PC-9 (cell line): ENCODE measurements at regions of chr4 and their contacts with region 1.

Region 1: GRCh38 chr4:173191623-173192041 is 23.0 kb downstream of the GALNT7 start:
- DNase-seq: peak in 1 of 2 experiments; percentile 97
- H3K4me3 ChIP-seq: no peak overlapping the region; the same call in 1 of the 2 replicates
- H3K27ac ChIP-seq: peak overlapping the region; percentile 95
- H3K4me1 ChIP-seq: peaks cover 26% of the 10 kb centered on the region
- H3K27me3 ChIP-seq: no peaks in the 10 kb centered on the region
- CTCF ChIP-seq: no peak

Region 2: GRCh38 chr4:173146451-173146850 is 45.2 kb before region 1 on chr4:
- CTCF ChIA-PET with region 1: no interaction called
- POLR2A ChIA-PET with region 1: no interaction called
- intact Hi-C with region 1: no loop called
- DNase-seq: peak in 1 of 2 experiments; percentile 39
- H3K4me3 ChIP-seq: no peak overlapping the region
- H3K27ac ChIP-seq: no peak overlapping the region
- H3K4me1 ChIP-seq: no peaks in the 10 kb centered on the region
- H3K27me3 ChIP-seq: no peaks in the 10 kb centered on the region
- CTCF ChIP-seq: no peak

Region 3: DNA sequence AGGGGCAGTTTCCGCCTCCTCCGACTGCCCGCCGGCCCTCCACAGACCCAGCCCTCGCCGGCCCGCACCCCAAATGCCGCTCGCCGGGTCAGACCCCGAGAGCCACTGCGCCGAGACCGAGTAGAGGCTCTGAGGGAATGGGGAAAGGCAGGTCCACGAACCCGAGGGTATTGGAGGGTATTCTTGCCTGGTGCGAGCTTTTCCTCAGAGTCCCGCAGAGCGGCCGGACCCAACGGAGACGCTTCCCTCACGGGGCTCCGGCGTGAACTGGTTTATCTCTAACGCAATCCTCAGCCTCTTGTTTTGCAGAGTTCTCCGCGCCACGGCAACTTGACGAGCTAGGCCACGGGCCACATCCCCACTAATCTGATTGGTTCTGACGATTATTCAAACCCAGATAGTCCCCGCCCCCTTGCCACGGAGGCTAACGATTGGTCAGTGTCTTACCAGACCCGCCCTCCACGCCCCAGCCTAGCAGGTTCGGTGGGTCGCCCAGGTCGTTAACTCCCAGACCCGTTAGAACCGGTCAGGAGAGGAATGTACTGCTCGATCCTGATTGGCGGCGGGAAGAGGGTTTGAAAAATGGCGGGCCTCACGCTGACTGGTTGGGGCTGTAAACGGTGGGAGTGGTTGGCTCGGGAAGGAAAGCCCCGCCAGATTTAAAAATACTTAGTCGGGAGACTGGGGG is 142.6 kb after region 1 on chr4 and contains the start of gene HMGB2:
- CTCF ChIA-PET with region 1: no interaction called
- POLR2A ChIA-PET with region 1: no interaction called
- intact Hi-C with region 1: loop called (anchors 1 kb)
- DNase-seq: peak; percentile 96 to 99
- H3K4me3 ChIP-seq: peak within 1 kb of the TSS; percentile 96
- H3K27ac ChIP-seq: peak within 1 kb of the TSS; percentile 79
- H3K4me1 ChIP-seq: peaks cover 25% of the 10 kb centered on the region
- H3K27me3 ChIP-seq: no peaks in the 10 kb centered on the region
- CTCF ChIP-seq: no peak
- total RNA-seq, gene HMGB2: 202 and 213 TPM in 2 replicates